ENCODE measurements at regions of chr14 and their contacts with region 1.

Region 1: DNA sequence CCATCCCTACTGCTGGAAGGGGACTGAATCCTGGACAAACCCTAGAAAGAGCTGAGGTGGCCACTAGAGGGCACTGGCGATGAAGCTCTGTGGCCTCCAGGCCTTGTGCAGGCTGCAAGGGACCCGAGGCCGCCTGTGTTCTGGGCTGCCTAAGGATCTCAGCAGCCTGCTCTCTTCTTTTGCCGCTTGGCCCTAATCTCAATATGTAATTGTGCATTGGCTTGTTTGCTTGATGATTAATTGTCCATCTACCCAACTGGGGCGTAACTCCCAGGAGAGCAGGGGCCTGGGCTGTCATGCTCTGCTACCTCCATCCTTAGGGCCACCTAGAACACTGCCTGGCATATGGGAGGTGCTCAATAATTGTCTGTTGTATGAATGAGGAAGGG is 73.8 kb downstream of the SYNE3 start:
- DNase-seq: peak; percentile 54 to 87 (median 77)
- ATAC-seq: peak; percentile 99
- H3K4me3 ChIP-seq: no peak overlapping the region
- H3K4me3 Mint-ChIP-seq: no peak overlapping the region
- H3K27ac ChIP-seq: no peak overlapping the region
- H3K27ac Mint-ChIP-seq: no peak overlapping the region
- H3K4me1 ChIP-seq: peaks cover 7% of the 10 kb centered on the region
- H3K4me1 Mint-ChIP-seq: peaks cover 4% of the 10 kb centered on the region
- H3K27me3 ChIP-seq: no peaks in the 10 kb centered on the region
- H3K27me3 Mint-ChIP-seq: no peaks in the 10 kb centered on the region
- CTCF ChIP-seq: peak; percentile 89

Region 2: DNA sequence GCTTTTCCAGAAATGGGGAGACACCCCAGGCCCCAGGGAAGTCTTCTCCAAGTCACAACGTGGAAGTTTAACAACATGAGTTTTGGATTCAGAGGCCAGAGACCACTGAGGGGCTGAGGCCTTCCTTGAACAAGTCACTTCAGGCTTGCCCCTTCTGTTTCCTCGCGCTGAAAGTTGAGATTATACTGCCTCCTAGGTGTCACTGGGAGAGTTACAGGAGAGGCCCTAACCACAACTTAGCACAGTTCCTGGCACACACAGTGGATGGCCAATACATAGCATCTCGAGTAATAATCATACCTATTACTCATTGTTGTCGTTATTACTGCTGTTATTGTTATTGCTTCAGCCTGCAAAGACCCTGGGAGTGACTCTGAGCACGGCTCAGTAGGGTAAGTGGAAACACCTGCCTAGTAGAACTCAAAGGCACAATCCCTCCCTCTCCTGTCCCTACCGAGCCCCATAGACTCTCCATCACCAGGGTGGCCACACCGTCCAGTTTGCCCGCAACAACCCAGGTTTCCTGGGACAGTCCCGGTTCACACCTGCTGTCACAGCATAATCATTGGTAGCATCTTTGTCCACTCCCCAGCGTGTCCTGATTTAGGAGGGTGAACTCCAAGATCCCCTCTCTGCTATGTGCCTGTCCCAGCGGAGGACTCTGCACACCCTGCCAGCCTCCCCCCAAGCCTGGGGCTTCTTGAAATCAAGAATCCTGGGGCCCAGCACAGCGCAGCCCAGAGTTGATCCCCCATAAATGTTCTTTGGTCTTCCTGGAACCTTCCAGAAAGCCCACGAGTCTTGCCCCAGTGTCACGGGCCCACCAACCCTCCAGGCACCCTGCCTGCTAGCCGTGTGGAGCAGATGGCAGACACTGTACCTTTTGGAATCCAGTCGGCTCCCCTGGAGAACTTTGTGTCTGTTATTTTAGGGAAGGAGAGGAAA is 11.2 kb before region 1 on chr14:
- CTCF ChIA-PET with region 1: interaction called, 13 read pairs
- POLR2A ChIA-PET with region 1: no interaction called
- intact Hi-C with region 1: no loop called
- DNase-seq: peak in 1 of 9 experiments; percentile 20
- ATAC-seq: no peak
- H3K4me3 ChIP-seq: no peak overlapping the region
- H3K4me3 Mint-ChIP-seq: no peak overlapping the region
- H3K27ac ChIP-seq: no peak overlapping the region
- H3K27ac Mint-ChIP-seq: peak overlapping the region; percentile 37
- H3K4me1 ChIP-seq: no peaks in the 10 kb centered on the region
- H3K4me1 Mint-ChIP-seq: peaks cover 3% of the 10 kb centered on the region
- H3K27me3 ChIP-seq: no peaks in the 10 kb centered on the region
- H3K27me3 Mint-ChIP-seq: no peaks in the 10 kb centered on the region
- CTCF ChIP-seq: peak; percentile 12

Region 3: GRCh38 chr14:95515596-95516552 is 73.2 kb after region 1 on chr14:
- CTCF ChIA-PET with region 1: interaction called, 532 read pairs
- POLR2A ChIA-PET with region 1: interaction called, 3 read pairs
- intact Hi-C with region 1: no loop called
- DNase-seq: peak; percentile 62 to 94 (median 84)
- ATAC-seq: peak; percentile 85
- H3K4me3 ChIP-seq: peak overlapping the region; percentile 65 to 79
- H3K4me3 Mint-ChIP-seq: peak overlapping the region; percentile 89
- H3K27ac ChIP-seq: peak overlapping the region; percentile 59 to 64
- H3K27ac Mint-ChIP-seq: peak overlapping the region; percentile 93
- H3K4me1 ChIP-seq: peaks cover 66% of the 10 kb centered on the region
- H3K4me1 Mint-ChIP-seq: peaks cover 70% of the 10 kb centered on the region
- H3K27me3 ChIP-seq: no peaks in the 10 kb centered on the region
- H3K27me3 Mint-ChIP-seq: no peaks in the 10 kb centered on the region
- CTCF ChIP-seq: peak; percentile 46

Region 4: GRCh38 chr14:95534299-95535225 is 91.9 kb after region 1 on chr14 and contains the start of gene GLRX5:
- CTCF ChIA-PET with region 1: interaction called, 532 read pairs
- POLR2A ChIA-PET with region 1: interaction called, 11 read pairs
- intact Hi-C with region 1: loop called in 1 of 2 experiments (anchors 2 kb)
- DNase-seq: peak; percentile 94 to 100 (median 97)
- ATAC-seq: peak; percentile 85
- H3K4me3 ChIP-seq: peak within 1 kb of the TSS; percentile 68 to 76
- H3K4me3 Mint-ChIP-seq: peak within 1 kb of the TSS; percentile 90
- H3K27ac ChIP-seq: peak within 1 kb of the TSS; percentile 77 to 92
- H3K27ac Mint-ChIP-seq: peak within 1 kb of the TSS; percentile 95
- H3K4me1 ChIP-seq: peaks cover 46% of the 10 kb centered on the region
- H3K4me1 Mint-ChIP-seq: peaks cover 71% of the 10 kb centered on the region
- H3K27me3 ChIP-seq: no peaks in the 10 kb centered on the region
- H3K27me3 Mint-ChIP-seq: no peaks in the 10 kb centered on the region
- CTCF ChIP-seq: no peak
- total RNA-seq, gene GLRX5: 13.7 to 15.2 TPM

Region 5: GRCh38 chr14:95561001-95561412 is 118.4 kb after region 1 on chr14:
- CTCF ChIA-PET with region 1: interaction called, 11 read pairs
- POLR2A ChIA-PET with region 1: no interaction called
- intact Hi-C with region 1: no loop called
- DNase-seq: peak; percentile 62 to 88 (median 84)
- ATAC-seq: peak; percentile 88
- H3K4me3 ChIP-seq: no peak overlapping the region
- H3K4me3 Mint-ChIP-seq: no peak overlapping the region
- H3K27ac ChIP-seq: no peak overlapping the region
- H3K27ac Mint-ChIP-seq: no peak overlapping the region
- H3K4me1 ChIP-seq: no peaks in the 10 kb centered on the region
- H3K4me1 Mint-ChIP-seq: peaks cover 4% of the 10 kb centered on the region
- H3K27me3 ChIP-seq: no peaks in the 10 kb centered on the region
- H3K27me3 Mint-ChIP-seq: peaks cover 5% of the 10 kb centered on the region
- CTCF ChIP-seq: peak; percentile 86

Region 6: GRCh38 chr14:95759941-95760340 is 317.3 kb after region 1 on chr14:
- CTCF ChIA-PET with region 1: no interaction called
- POLR2A ChIA-PET with region 1: no interaction called
- intact Hi-C with region 1: no loop called
- DNase-seq: no peak
- ATAC-seq: no peak
- H3K4me3 ChIP-seq: no peak overlapping the region
- H3K4me3 Mint-ChIP-seq: no peak overlapping the region
- H3K27ac ChIP-seq: no peak overlapping the region
- H3K27ac Mint-ChIP-seq: no peak overlapping the region
- H3K4me1 ChIP-seq: no peaks in the 10 kb centered on the region
- H3K4me1 Mint-ChIP-seq: no peaks in the 10 kb centered on the region
- H3K27me3 ChIP-seq: no peaks in the 10 kb centered on the region
- H3K27me3 Mint-ChIP-seq: peaks cover 29% of the 10 kb centered on the region
- CTCF ChIP-seq: no peak

Region 7: GRCh38 chr14:95774265-95775160 is 331.9 kb after region 1 on chr14:
- CTCF ChIA-PET with region 1: interaction called, 4 read pairs
- POLR2A ChIA-PET with region 1: no interaction called
- intact Hi-C with region 1: loop called (anchors 1 kb)
- DNase-seq: peak; percentile 7 to 66 (median 48)
- ATAC-seq: no peak
- H3K4me3 ChIP-seq: no peak overlapping the region
- H3K4me3 Mint-ChIP-seq: no peak overlapping the region
- H3K27ac ChIP-seq: no peak overlapping the region
- H3K27ac Mint-ChIP-seq: no peak overlapping the region
- H3K4me1 ChIP-seq: no peaks in the 10 kb centered on the region
- H3K4me1 Mint-ChIP-seq: peaks cover 1% of the 10 kb centered on the region
- H3K27me3 ChIP-seq: no peaks in the 10 kb centered on the region
- H3K27me3 Mint-ChIP-seq: peaks cover 18% of the 10 kb centered on the region
- CTCF ChIP-seq: peak; percentile 89